Activated B cell treated with CpG ODN at 0.5 μM for 24 hours (primary cell): ENCODE measurements at regions of chr1 and their contacts with region 1.

Region 1: GRCh38 chr1:53326088-53326597 is 1.7 kb downstream of the LRP8 start:
- DNase-seq: peak; percentile 92
- ATAC-seq: peak; percentile 88
- H3K4me3 Mint-ChIP-seq: peak overlapping the region; percentile 93
- H3K27ac Mint-ChIP-seq: peak overlapping the region; percentile 92
- H3K4me1 Mint-ChIP-seq: peaks cover 19% of the 10 kb centered on the region
- H3K27me3 Mint-ChIP-seq: no peaks in the 10 kb centered on the region
- CTCF ChIP-seq: no peak

Region 2: DNA sequence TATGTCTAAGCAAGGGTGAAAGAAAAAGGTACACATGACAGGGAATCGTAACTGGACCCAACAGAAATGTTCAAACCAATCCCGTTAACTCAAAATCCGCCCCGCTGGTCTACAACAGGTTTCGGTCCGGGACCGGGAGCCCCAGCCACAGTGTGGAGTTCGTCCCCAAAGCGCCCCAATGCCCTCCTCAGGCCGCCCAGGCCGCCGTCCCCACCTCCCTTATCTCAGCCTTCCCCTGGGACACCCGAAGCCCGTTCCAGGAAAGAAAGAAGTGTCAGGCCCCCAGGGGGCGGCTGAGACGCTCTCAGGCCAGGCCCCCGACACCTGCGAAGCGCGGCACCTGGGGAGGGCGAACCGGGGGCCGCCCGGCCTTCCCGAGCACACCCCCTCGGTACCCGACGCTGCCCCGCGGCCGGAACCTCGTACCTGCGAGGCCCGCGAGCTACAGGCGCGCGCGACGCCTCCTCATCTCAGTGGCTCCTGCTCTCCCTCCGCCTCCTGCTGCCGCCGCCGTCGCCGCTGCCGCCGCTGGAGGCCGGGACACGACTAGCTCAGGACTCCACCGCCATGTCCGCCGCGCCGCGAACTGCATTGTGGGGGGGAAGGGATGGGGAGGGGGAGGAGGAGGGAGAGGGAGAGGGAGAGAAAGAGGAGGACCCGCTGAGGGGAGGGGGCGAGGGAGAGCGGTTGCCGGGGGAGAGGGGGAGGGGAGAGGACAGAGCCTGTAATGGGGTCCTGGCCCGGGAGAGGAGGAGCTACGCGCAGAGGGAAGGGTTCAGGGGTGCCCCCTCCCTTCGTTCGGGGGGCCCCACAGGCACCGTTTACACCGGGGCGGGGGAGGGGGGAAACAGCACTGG is 773.4 kb before region 1 on chr1 and contains the start of gene TUT4:
- CTCF ChIA-PET with region 1: no interaction called
- POLR2A ChIA-PET with region 1: no interaction called
- intact Hi-C with region 1: loop called (anchors 10 kb)
- DNase-seq: peak; percentile 74
- ATAC-seq: peak; percentile 53
- H3K4me3 Mint-ChIP-seq: no peak within 1 kb of the TSS
- H3K27ac Mint-ChIP-seq: peak within 1 kb of the TSS; percentile 83
- H3K4me1 Mint-ChIP-seq: peaks cover 39% of the 10 kb centered on the region
- H3K27me3 Mint-ChIP-seq: no peaks in the 10 kb centered on the region
- CTCF ChIP-seq: no peak
- total RNA-seq, gene TUT4: 143 and 158 TPM in 2 replicates

Region 3: GRCh38 chr1:53220171-53220961 is 105.8 kb before region 1 on chr1 and contains the start of gene CZIB:
- CTCF ChIA-PET with region 1: no interaction called
- POLR2A ChIA-PET with region 1: interaction called, 3 read pairs
- intact Hi-C with region 1: loop called (anchors 1 kb)
- DNase-seq: peak; percentile 98
- ATAC-seq: peak; percentile 92
- H3K4me3 Mint-ChIP-seq: peak within 1 kb of the TSS; percentile 94
- H3K27ac Mint-ChIP-seq: peak within 1 kb of the TSS; percentile 97
- H3K4me1 Mint-ChIP-seq: peaks cover 20% of the 10 kb centered on the region
- H3K27me3 Mint-ChIP-seq: no peaks in the 10 kb centered on the region
- CTCF ChIP-seq: no peak
- total RNA-seq, gene CZIB: 48.9 and 51.8 TPM in 2 replicates

Region 4: DNA sequence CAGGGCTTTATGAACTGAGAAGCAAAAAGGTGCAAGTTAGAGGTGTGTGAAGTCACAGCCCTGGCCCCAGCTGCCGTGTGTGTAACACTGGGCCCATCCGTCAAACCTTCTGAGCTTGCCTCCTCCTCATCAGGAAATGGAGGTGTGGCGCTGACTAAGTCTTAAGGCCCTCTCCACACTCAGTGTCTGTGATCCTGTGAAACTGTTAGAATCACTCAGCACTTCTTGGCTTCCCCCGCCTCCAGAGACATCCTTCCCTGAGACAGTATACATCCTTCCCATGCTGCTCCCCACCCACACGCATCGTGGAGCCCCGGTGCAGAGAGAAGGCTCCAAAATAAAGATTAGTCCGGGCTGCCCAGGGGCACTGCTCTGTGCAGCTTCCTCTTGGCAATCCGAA is 31.6 kb before region 1 on chr1:
- CTCF ChIA-PET with region 1: no interaction called
- POLR2A ChIA-PET with region 1: interaction called, 12 read pairs
- intact Hi-C with region 1: loop called (anchors 5 kb)
- DNase-seq: no peak
- ATAC-seq: no peak
- H3K4me3 Mint-ChIP-seq: no peak overlapping the region
- H3K27ac Mint-ChIP-seq: no peak overlapping the region
- H3K4me1 Mint-ChIP-seq: peaks cover 23% of the 10 kb centered on the region
- H3K27me3 Mint-ChIP-seq: no peaks in the 10 kb centered on the region
- CTCF ChIP-seq: no peak

Region 5: DNA sequence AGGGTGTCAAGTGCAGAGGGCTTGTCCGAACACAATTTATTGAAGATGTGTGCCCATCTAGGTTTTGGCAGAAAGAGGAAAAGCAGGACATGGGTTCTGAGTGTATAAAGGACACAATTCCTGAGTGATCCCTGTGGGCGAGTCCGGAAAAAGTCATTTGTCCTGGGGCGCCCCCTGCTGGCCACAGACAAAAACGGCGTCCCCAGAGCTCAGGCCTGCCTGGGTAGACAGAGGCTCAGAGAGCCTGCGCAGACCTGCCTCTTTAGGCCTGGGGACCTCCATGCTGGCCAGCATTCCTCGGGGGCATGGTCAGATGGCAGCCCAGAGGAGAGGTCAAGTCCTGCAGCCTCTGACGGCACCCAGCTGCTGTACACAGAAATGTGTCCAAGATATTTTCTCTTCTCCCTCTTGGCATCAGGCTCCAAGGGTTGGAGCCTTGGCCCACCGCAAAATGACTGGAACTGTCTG is 67.2 kb after region 1 on chr1:
- CTCF ChIA-PET with region 1: interaction called, 10 read pairs
- POLR2A ChIA-PET with region 1: interaction called, 3 read pairs
- intact Hi-C with region 1: loop called (anchors 1 kb)
- DNase-seq: peak; percentile 73
- ATAC-seq: peak; percentile 80
- H3K4me3 Mint-ChIP-seq: no peak overlapping the region
- H3K27ac Mint-ChIP-seq: no peak overlapping the region
- H3K4me1 Mint-ChIP-seq: peaks cover 13% of the 10 kb centered on the region
- H3K27me3 Mint-ChIP-seq: peaks cover 2% of the 10 kb centered on the region
- CTCF ChIP-seq: peak; percentile 43

Region 6: GRCh38 chr1:54199765-54200518 is 873.8 kb after region 1 on chr1 and contains the starts of genes CYB5RL and MRPL37:
- CTCF ChIA-PET with region 1: no interaction called
- POLR2A ChIA-PET with region 1: no interaction called
- intact Hi-C with region 1: loop called (anchors 5 kb)
- DNase-seq: peak; percentile 74
- ATAC-seq: peak; percentile 99
- H3K4me3 Mint-ChIP-seq: peak within 1 kb of the TSS; percentile 92
- H3K27ac Mint-ChIP-seq: peak within 1 kb of the TSS; percentile 81
- H3K4me1 Mint-ChIP-seq: peaks cover 32% of the 10 kb centered on the region
- H3K27me3 Mint-ChIP-seq: no peaks in the 10 kb centered on the region
- CTCF ChIP-seq: no peak
- total RNA-seq, gene CYB5RL: 8.4 and 8.7 TPM in 2 replicates
- total RNA-seq, gene MRPL37: 62.5 and 64.1 TPM in 2 replicates